ENCODE measurements at regions of chr2 and their contacts with region 1.

Region 1: DNA sequence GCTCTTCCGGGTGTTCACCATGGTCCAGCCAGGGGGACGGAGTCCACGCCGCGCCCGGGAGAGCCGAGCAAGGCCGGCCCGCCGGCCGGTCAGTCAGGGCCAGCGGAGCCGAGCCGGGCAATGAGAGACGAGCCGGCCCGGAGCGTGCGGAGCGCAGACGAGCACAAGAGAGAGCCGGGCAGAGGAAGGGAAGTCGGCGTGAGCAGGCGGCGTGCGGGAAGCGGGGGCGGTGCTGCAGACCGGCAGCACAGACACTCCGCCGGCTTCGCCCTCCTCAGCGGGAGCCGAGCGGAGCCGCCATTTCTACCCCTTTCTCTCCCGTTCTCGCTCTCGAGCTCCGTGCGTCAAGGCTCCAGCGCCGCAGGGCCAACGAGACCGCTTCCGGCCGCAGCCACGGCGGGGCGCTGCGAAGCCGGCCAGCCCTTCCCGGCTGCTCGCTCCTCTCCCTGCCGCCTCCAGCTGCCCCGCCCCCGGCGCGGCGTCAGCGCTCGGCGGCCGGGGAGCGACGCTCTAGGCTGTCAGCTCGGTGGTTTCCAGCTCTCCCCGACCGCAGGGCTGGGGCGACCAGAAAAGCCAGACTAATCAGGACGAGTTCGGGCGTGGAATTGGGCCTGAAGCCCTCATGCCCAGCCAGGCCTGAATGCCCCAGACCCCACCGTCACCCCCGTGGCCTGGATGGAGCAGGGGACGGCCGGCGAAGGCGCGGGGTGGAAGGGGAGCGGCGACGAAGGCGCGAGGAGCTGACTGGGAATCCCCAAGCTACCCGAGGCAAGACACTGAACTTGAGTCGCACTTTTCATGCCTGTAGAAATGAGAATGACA is at the start of gene ATAD2B:
- DNase-seq: peak; percentile 96
- H3K4me3 ChIP-seq: peak within 1 kb of the TSS; percentile 91 to 98 (median 97)
- H3K27ac ChIP-seq: peak within 1 kb of the TSS; percentile 90
- H3K4me1 ChIP-seq: peaks cover 14% of the 10 kb centered on the region
- H3K27me3 ChIP-seq: no peaks in the 10 kb centered on the region
- CTCF ChIP-seq: peak; percentile 72 to 77
- total RNA-seq, gene ATAD2B: 14.0 to 16.4 TPM

Region 2: GRCh38 chr2:23624378-23624777 is 302.6 kb before region 1 on chr2:
- CTCF ChIA-PET with region 1: no interaction called
- dilution Hi-C with region 1: no loop called
- in situ Hi-C with region 1: no loop called
- intact Hi-C with region 1: no loop called
- DNase-seq: no peak
- H3K4me3 ChIP-seq: no peak overlapping the region
- H3K27ac ChIP-seq: no peak overlapping the region
- H3K4me1 ChIP-seq: no peaks in the 10 kb centered on the region
- H3K27me3 ChIP-seq: no peaks in the 10 kb centered on the region
- CTCF ChIP-seq: peak; percentile 44 to 55

Region 3: DNA sequence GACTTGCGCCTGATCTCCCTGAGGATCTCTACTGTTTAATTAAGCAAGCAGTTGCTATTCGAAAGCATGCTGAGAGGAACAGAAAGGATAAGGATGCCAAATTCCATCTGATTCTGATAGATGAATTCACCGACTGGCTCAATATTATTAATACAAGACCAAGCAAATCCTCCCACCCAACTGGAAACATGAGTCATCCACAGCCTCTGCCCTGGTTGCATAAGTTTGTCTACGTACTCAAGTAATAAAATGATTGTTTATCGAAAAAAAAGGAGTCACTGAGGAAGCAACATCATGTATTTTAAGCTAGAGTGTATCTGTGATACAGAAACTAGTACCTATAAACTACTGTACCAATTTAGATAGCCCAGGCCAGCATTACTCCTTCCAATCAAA is 26.0 kb before region 1 on chr2:
- CTCF ChIA-PET with region 1: interaction called, 3 read pairs
- dilution Hi-C with region 1: no loop called
- in situ Hi-C with region 1: no loop called
- intact Hi-C with region 1: loop called (anchors 1 kb)
- DNase-seq: peak; percentile 82
- H3K4me3 ChIP-seq: peak overlapping the region; percentile 4 to 25 (median 24)
- H3K27ac ChIP-seq: peak overlapping the region; percentile 82
- H3K4me1 ChIP-seq: peaks cover 37% of the 10 kb centered on the region
- H3K27me3 ChIP-seq: no peaks in the 10 kb centered on the region
- CTCF ChIP-seq: no peak

Region 4: GRCh38 chr2:23939987-23940717 is 13.2 kb after region 1 on chr2 and contains the start of gene UBXN2A:
- CTCF ChIA-PET with region 1: no interaction called
- dilution Hi-C with region 1: no loop called
- in situ Hi-C with region 1: no loop called
- intact Hi-C with region 1: loop called (anchors 1 kb)
- DNase-seq: peak; percentile 77
- H3K4me3 ChIP-seq: peak within 1 kb of the TSS; percentile 90 to 99 (median 97)
- H3K27ac ChIP-seq: peak within 1 kb of the TSS; percentile 86
- H3K4me1 ChIP-seq: peaks cover 24% of the 10 kb centered on the region
- H3K27me3 ChIP-seq: no peaks in the 10 kb centered on the region
- CTCF ChIP-seq: no peak
- total RNA-seq, gene UBXN2A: 18.7 to 19.1 TPM

Region 5: DNA sequence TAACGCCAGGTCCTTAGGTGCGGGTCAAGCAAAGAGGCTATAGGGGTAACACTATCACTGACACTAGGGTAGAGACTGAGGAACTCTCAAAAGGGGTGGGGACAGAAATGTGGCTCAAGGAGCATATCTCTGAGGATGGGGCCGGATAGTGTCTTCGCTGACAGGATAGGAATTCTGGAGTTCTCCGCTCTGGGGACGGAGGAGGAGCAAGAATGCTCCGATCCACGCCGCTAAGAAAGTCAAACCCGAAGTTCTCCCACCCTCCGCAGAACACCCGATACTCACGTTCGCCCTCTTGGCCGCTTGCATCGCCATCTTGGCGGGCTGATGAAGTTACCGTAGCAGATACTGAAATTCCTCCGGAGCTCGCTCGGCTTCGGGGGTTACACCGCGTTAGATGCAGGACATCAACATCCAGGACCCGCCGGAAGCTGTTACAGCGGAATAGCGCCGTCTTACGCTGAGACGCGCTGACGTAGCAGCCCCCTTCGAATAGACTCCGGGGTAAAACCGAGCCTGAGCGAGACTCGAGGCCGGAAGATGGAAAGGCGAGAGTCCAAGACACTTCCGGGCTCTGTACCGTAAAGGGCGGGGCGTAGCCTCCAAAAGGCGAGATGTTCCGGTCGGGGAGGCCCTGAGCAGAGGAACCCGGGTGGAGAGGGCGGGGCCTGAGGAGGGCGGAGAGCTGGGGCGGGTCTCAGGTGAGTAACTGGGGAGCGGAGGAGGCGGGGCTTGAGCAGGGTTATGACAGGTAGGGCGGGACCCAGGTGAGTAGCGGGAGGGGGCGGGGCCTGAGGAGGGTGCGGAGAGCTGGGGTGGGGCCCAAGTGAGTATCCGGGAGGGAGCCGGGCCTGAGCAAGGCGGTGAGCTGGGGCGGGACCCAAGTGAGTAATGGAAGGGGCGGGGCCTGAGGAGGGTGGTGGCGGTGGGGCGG is 149.2 kb after region 1 on chr2 and contains the start of gene SF3B6:
- CTCF ChIA-PET with region 1: no interaction called
- dilution Hi-C with region 1: no loop called
- in situ Hi-C with region 1: no loop called
- intact Hi-C with region 1: loop called (anchors 1 kb)
- DNase-seq: peak; percentile 100
- H3K4me3 ChIP-seq: peak within 1 kb of the TSS; percentile 90 to 95 (median 94)
- H3K27ac ChIP-seq: peak within 1 kb of the TSS; percentile 92
- H3K4me1 ChIP-seq: peaks cover 12% of the 10 kb centered on the region
- H3K27me3 ChIP-seq: no peaks in the 10 kb centered on the region
- CTCF ChIP-seq: no peak
- total RNA-seq, gene SF3B6: 101 to 106 TPM

Region 6: DNA sequence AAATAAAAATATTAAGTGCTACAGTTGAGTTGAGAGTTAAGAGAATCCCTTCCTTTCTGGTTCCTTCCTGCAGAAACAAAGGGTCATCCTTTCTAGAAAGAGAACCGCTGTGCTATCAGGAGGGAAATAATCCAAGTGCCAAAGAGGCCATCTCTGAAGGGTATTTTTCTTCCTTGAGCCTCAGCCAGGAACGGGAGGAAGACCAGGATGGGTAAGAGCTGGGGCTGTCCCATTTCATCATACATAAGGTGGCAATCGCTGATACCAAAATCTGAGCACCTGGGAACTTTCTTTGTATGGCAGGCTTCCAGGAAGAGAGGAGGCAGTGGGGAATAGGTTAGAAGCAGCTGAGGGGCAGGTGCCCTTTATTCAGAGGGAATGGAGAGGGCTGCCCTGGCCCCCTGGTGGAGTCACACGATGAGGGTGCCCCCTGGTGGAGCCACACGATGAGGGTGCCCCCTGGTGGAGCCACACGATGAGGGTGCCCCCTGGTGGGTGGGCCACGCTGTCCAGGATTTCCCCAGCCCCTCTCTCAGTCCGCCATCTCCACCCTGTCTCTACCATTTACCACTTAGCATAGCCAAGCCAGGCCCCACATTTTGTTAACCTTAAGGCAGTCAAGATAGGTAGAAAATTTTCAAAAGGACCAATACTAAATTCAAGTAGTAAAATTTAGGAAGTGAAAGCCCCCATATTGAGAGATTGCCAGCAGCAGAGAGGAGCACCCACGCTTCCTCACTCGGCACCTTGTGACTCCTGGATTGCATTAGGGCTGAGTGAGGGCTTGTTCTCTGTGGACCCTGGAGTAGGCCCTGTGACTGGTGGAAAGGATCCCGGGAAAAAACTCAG is 237.4 kb after region 1 on chr2:
- CTCF ChIA-PET with region 1: no interaction called
- dilution Hi-C with region 1: no loop called
- in situ Hi-C with region 1: no loop called
- intact Hi-C with region 1: loop called (anchors 2 kb)
- DNase-seq: no peak
- H3K4me3 ChIP-seq: no peak overlapping the region
- H3K27ac ChIP-seq: no peak overlapping the region
- H3K4me1 ChIP-seq: no peaks in the 10 kb centered on the region
- H3K27me3 ChIP-seq: no peaks in the 10 kb centered on the region
- CTCF ChIP-seq: peak; percentile 49 to 69

Region 7: DNA sequence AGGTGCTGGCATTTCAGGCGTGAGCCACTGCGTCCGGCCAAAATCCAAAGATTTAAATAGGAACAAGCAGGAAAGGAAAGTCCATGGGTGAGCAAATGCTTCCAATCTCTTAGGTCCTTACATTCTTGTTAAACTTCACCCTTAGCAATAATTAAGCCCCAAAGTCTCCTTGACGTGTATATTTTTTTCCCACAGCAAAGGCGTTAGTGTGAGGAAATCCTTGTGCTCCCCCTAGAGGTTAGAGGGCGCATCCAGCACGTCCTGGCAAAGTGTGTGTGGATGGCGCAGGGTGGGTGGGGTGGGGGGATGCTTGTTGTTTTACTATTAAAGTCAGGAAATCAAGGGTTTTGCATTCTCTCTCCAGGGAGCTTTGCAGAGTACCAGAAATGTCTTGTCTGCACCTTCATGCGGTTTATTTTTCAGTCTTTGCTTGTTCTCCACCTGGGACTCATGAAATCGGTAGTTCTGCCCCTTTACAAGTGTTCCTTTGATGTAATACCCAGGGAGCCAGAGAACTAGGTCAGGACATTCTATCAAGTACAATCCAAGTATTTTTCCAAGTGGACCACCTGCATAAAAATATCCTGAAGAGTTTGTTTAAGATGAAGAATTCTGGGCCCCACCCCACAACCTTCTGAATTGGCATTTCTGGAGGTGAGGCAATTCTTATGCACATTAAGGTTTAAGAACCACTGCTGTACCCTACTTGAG is 455.6 kb after region 1 on chr2:
- CTCF ChIA-PET with region 1: no interaction called
- dilution Hi-C with region 1: no loop called
- in situ Hi-C with region 1: no loop called
- intact Hi-C with region 1: loop called (anchors 5 kb)
- DNase-seq: peak; percentile 42
- H3K4me3 ChIP-seq: no peak overlapping the region
- H3K27ac ChIP-seq: no peak overlapping the region
- H3K4me1 ChIP-seq: peaks cover 5% of the 10 kb centered on the region
- H3K27me3 ChIP-seq: no peaks in the 10 kb centered on the region
- CTCF ChIP-seq: peak; percentile 61 to 78

Region 8: GRCh38 chr2:24438106-24438505 is 511.1 kb after region 1 on chr2:
- CTCF ChIA-PET with region 1: no interaction called
- dilution Hi-C with region 1: no loop called
- in situ Hi-C with region 1: no loop called
- intact Hi-C with region 1: no loop called
- DNase-seq: no peak
- H3K4me3 ChIP-seq: no peak overlapping the region
- H3K27ac ChIP-seq: no peak overlapping the region
- H3K4me1 ChIP-seq: no peaks in the 10 kb centered on the region
- H3K27me3 ChIP-seq: no peaks in the 10 kb centered on the region
- CTCF ChIP-seq: no peak